ENCODE measurements at regions of chr7 and their contacts with region 1.

Region 1: DNA sequence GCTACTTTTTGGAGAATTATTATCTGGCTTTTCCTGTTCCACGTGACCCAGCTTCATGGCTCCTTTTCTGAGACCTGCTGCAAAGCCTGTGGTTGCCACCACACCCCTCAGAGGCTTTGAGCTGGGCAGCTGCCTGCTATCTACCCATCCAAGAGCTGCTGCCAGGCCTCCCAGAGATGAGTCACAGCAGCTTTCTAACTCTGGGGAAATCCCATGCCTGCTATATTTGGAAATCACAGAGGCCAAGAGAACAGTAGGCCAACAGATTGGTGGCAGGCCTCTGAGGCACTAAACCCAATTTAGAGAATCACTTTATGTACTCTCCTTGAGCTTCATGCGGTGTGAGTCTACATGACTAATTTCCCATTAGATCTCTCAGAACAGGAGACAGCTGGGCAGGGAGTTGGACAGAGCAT is 35.2 kb downstream of the SGCE start:
- DNase-seq: peak; percentile 89 to 95
- ATAC-seq: peak; percentile 100
- H3K4me3 ChIP-seq: no peak overlapping the region
- H3K27ac ChIP-seq: peak overlapping the region; percentile 79 to 88 (median 86)
- H3K4me1 ChIP-seq: peaks cover 8 to 9% of the 10 kb centered on the region in 2 donors
- H3K27me3 ChIP-seq: no peaks in the 10 kb centered on the region
- CTCF ChIP-seq: no peak
- POLR2A ChIP-seq: peak in 1 of 2 donors; percentile 28

Region 2: GRCh38 chr7:94509879-94510581 is 110.7 kb before region 1 on chr7:
- in situ Hi-C with region 1: no loop called
- intact Hi-C with region 1: loop called (anchors 10 kb)
- DNase-seq: peak; percentile 43 to 59
- ATAC-seq: peak; percentile 85 to 90
- H3K4me3 ChIP-seq: peak overlapping the region; percentile 80 to 94 (median 88)
- H3K27ac ChIP-seq: peak overlapping the region; percentile 88 to 95 (median 94)
- H3K4me1 ChIP-seq: peaks cover 28 to 36% of the 10 kb centered on the region in 2 donors
- H3K27me3 ChIP-seq: no peaks in the 10 kb centered on the region
- CTCF ChIP-seq: peak in 3 of 5 experiments; percentile 9 to 53 (median 33)
- POLR2A ChIP-seq: peak in 1 of 2 donors; percentile 18

Region 3: DNA sequence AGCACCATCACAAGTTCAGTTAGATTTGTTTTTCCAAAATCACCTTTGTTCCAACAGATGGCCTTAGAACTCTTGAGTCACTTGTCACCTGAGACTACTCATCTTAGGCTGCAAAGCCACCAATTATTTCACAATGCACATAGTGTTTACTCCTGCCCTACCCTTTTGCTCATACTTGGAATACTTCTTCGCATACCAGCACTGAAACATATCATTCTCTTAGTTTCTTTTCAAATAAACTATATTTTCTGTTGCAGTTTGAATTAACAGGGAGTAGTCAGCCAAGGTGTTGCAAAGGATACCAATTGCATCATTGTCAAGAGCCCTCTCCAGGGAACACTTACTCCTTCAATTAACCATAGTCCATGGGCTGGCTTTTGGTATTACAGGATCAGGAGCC is 40.1 kb before region 1 on chr7:
- in situ Hi-C with region 1: no loop called
- intact Hi-C with region 1: loop called (anchors 2 kb)
- DNase-seq: peak in 1 of 2 donors; percentile 4
- ATAC-seq: peak; percentile 67 to 89
- H3K4me3 ChIP-seq: no peak overlapping the region
- H3K27ac ChIP-seq: peak overlapping the region in 1 of 4 donors; percentile 6
- H3K4me1 ChIP-seq: peaks cover 8 to 13% of the 10 kb centered on the region in 2 donors
- H3K27me3 ChIP-seq: no peaks in the 10 kb centered on the region
- CTCF ChIP-seq: no peak
- POLR2A ChIP-seq: no peak

Region 4: DNA sequence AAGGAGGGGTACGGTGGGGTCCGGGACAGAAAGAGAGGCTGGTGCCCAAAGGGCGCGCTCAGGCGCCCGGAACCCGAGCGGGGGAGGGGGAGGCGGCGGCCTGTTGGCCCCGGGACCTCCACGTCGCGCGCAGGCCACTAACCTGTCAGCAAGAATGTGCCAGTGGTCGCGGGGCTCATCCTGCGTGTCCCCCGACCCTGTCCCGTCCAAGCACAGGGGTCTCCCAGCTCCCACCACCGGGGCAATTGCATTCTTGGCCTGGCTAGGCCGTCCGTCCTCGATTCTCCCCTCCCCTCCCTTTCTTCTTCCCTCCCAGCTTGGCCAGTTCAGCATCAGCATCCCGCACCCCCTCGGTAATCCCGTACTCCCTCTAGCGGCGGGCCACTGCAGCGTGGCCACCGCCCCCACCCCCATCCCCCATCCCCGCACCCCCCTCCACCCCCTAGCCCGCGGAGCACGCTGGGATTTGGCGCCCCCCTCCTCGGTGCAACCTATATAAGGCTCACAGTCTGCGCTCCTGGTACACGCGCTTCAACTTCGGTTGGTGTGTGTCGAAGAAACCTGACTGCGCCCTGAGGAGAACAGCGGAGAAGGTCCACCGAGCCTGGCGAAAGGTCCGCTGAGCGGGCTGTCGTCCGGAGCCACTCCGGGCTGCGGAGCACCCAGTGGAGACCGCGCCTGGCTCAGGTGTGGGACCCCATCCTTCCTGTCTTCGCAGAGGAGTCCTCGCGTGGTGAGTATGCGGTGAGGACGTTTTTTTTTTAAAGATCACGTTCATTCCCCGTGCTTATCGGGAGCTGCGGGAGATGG is 35.3 kb after region 1 on chr7 and contains the start of gene SGCE:
- in situ Hi-C with region 1: no loop called
- intact Hi-C with region 1: no loop called
- DNase-seq: peak in 1 of 2 donors; percentile 44
- ATAC-seq: peak in 1 of 2 donors; percentile 37
- H3K4me3 ChIP-seq: peak within 1 kb of the TSS; percentile 49 to 61 (median 52)
- H3K27ac ChIP-seq: peak within 1 kb of the TSS; percentile 12 to 62 (median 54)
- H3K4me1 ChIP-seq: peaks cover 15 to 17% of the 10 kb centered on the region in 2 donors
- H3K27me3 ChIP-seq: peaks cover 30 to 43% (median 36%) of the 10 kb centered on the region in 3 donors
- CTCF ChIP-seq: peak in 3 of 5 experiments; percentile 31 to 70 (median 59)
- POLR2A ChIP-seq: no peak
- total RNA-seq, gene SGCE: 5.1 to 8.6 (median 6.1) TPM

Region 5: DNA sequence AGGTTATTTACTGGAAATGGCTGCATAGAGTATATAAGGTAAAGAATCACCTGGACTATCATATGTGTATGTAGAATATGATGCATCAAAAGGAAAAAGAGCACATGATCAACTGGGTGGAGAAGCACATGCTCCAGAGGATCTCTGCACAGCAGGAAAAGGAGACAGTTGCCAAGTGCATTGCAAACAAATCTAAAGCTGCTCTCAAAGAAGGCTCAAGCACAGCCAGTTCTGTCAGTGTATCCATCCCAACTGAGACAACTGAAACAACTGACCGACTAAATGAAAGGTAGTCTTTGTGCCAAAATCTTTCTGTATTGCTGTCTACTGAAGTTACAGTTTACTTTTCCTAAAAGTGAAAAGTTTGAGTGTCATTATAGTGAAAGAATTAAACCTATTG is 118.5 kb after region 1 on chr7:
- in situ Hi-C with region 1: no loop called
- intact Hi-C with region 1: no loop called
- DNase-seq: no peak
- ATAC-seq: no peak
- H3K4me3 ChIP-seq: no peak overlapping the region
- H3K27ac ChIP-seq: no peak overlapping the region
- H3K4me1 ChIP-seq: no peaks in the 10 kb centered on the region
- H3K27me3 ChIP-seq: no peaks in the 10 kb centered on the region
- CTCF ChIP-seq: no peak
- POLR2A ChIP-seq: no peak